ENCODE measurements at regions of chr4 and their contacts with region 1.

Region 1: DNA sequence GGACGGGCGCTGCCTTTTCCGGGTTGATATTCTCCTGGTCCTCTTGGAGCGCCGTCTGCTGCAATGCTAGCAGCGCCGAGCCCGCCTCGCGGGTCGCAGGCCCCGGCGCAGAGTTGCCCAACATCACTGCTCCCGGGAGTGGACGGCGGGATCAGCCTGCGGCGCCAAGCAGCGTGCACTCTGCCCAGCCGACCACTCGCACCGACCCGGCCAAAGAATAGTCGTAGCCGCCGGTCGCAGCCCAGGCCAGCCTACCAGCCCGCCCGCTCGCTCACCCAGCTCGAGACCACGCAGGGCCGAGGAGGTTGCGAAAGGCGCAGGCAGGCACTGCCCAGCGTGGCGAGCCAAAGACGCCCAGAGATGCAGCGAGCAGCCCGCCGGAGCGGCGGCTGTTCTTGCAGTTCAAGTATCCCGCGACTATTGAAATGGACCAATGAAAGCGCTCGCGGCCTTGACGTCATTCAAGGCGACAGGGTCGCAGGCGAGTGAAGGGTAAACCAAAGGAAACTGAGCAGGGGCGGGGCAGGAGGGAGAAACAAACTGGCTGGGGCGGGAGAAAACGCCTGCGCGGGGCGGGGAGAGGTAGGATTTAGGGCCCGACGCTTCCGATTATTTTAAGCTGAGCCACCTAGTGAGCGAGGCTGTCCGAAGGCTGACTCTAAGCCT is at the start of gene CCNA2:
- DNase-seq: peak; percentile 86
- ATAC-seq: peak; percentile 99
- H3K4me3 Mint-ChIP-seq: peak within 1 kb of the TSS; percentile 87
- H3K27ac Mint-ChIP-seq: peak within 1 kb of the TSS; percentile 82
- H3K4me1 Mint-ChIP-seq: peaks cover 17% of the 10 kb centered on the region
- H3K27me3 Mint-ChIP-seq: no peaks in the 10 kb centered on the region
- CTCF ChIP-seq: no peak
- total RNA-seq, gene CCNA2: 1.4 and 2.0 TPM in 2 replicates

Region 2: DNA sequence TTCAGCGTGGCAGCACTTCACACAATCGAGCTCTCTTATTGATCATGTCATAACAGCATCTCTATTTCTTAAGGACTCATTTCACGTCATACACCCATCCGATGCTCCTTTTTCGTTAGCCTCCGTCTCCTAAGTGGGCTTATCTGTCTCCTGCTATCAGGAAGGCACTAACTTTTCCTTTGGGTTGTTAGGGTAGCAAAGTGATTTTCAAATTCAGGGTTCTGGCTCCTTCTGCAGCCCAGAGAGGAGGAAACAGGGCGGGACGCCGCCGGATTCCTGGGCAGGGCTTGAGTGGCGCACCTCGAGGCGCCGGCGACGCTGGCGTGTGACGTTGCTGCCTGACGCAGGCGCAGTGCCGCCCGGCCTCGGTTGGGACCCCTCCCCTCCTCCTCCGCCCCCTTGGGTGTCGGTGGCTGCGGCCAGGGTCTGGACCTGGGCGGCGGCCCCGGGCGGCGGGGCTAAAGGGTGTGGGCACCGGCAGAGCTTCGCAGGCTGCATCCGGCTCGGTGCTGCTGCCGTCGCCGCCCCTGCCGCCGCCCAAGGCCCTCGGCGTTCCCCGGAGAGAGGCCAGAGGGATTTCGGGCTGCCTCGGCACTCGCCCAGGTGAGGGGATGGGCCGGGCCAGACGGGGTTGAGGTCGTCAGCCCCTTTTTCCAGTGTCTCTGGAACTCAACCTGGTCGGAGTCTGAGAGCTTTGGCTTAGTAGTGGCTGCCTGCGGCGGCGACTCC is 328.5 kb after region 1 on chr4 and contains the start of gene BLTP1:
- CTCF ChIA-PET with region 1: no interaction called
- POLR2A ChIA-PET with region 1: interaction called, 4 read pairs
- intact Hi-C with region 1: loop called (anchors 1 kb)
- DNase-seq: peak; percentile 85
- ATAC-seq: peak; percentile 95
- H3K4me3 Mint-ChIP-seq: peak within 1 kb of the TSS; percentile 97
- H3K27ac Mint-ChIP-seq: peak within 1 kb of the TSS; percentile 97
- H3K4me1 Mint-ChIP-seq: peaks cover 39% of the 10 kb centered on the region
- H3K27me3 Mint-ChIP-seq: no peaks in the 10 kb centered on the region
- CTCF ChIP-seq: no peak
- total RNA-seq, gene BLTP1: 39.1 and 44.4 TPM in 2 replicates